GM10248 (cell line): ENCODE measurements at regions of chr5 and their contacts with region 1.

Region 1: DNA sequence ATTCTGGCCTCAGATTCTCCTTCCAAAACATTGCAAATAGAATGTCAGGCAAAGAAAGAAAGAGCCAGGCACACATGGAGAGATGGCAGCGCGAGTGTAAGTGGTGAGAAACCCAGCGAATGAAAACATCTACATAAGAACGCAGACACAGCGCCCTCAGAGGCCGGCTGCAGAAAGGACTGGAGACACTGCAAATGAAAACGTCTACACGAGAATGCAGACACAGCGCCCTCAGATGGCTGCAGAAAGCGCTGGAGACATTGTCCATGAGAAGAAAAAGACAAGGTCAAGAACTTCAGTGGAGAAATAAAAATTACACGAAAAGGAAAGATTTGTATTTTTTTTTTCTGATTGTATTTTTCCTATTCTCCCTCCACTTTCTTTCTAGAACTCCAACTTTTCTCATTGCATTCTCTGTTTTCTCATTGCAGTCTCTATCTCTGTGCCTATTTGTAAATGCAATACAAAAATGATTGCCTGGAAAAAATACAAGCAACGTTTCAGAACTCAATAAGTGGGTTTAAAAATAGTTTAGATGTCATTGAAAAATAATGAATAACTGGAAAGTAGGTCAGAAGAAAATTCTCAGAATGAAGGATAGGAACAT is 117.9 kb upstream of the LPCAT1 start:
- DNase-seq: peak; percentile 87
- CTCF ChIP-seq: peak; percentile 98

Region 2: DNA sequence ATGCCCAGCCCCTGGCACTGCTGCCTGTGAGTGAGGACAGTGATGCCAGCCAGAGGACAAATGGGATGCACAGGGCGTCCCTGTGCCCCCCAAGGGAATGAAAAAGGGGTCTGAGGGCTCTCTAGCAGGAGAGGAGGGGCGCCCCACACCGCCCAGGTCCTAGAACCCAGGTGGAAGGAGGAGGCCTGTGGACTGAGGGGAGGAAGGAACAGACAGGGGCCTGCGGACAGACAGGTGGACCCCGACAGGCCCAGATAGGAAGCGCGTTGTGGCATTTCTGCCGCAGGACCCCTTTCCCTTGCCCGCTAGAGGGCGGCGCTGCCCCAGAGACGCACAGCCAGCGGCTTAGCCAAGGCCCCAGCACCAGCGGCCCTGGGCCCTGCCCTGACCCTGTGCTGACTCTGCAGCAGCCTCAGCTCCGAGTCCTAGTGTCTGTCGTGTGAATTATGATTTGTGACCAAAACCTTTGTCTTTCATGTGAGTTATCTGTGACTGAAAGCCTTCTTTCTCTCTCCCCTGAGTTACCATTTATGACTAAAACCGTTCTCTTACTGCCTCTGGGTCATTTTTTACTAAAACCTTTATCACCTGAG is 718.3 kb before region 1 on chr5:
- CTCF ChIA-PET with region 1: interaction called, 22 read pairs
- POLR2A ChIA-PET with region 1: no interaction called
- DNase-seq: peak; percentile 89
- CTCF ChIP-seq: peak; percentile 89

Region 3: GRCh38 chr5:1167728-1168709 is 473.6 kb before region 1 on chr5:
- CTCF ChIA-PET with region 1: interaction called, 69 read pairs
- POLR2A ChIA-PET with region 1: no interaction called
- DNase-seq: peak; percentile 82
- CTCF ChIP-seq: peak; percentile 85

Region 4: GRCh38 chr5:1174122-1174936 is 467.3 kb before region 1 on chr5:
- CTCF ChIA-PET with region 1: interaction called, 69 read pairs
- POLR2A ChIA-PET with region 1: no interaction called
- DNase-seq: peak; percentile 72
- CTCF ChIP-seq: peak; percentile 57

Region 5: DNA sequence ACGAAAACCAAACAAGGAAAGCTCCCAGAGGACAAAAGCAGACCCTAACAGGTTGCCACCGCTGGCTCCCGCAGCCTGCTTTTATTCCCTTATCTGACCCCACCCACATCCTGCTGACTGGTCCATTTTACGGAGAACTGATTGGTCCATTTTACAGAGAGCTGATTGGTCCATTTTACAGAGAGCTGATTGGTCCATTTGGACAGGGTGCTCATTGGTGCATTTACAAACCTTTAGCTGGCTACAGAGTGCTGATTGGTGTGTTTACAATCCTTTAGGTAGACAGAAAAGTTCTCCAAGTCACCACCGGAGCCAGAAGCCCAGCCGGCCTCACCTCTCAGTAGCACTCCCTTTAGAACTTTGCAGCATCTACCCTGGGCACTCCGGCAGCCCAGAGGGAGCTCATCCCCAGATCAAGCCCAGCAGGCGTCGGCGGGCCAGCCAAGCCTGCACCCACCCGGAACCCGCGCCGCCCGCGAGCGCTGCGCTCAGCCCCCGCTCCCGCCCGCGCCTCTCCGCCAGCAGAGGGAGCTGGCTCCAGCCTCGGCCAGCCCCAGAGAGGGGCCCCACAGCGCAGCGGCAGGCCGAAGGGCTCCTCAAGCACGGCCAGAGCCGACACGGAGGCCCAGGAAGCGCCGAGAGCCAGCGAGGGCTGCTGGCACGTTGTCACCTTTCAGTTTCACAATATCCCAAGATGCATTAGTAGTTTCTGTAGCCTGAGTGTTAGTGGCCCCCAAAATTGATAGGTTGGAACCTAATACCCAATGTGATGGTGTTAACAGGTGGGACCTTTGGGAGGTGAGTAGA is 261.4 kb before region 1 on chr5:
- CTCF ChIA-PET with region 1: interaction called, 13 read pairs
- POLR2A ChIA-PET with region 1: no interaction called
- DNase-seq: no peak
- CTCF ChIP-seq: peak; percentile 76

Region 6: GRCh38 chr5:1652596-1653345 is 11.1 kb after region 1 on chr5:
- CTCF ChIA-PET with region 1: interaction called, 18 read pairs
- POLR2A ChIA-PET with region 1: no interaction called
- DNase-seq: no peak
- CTCF ChIP-seq: no peak

Region 7: DNA sequence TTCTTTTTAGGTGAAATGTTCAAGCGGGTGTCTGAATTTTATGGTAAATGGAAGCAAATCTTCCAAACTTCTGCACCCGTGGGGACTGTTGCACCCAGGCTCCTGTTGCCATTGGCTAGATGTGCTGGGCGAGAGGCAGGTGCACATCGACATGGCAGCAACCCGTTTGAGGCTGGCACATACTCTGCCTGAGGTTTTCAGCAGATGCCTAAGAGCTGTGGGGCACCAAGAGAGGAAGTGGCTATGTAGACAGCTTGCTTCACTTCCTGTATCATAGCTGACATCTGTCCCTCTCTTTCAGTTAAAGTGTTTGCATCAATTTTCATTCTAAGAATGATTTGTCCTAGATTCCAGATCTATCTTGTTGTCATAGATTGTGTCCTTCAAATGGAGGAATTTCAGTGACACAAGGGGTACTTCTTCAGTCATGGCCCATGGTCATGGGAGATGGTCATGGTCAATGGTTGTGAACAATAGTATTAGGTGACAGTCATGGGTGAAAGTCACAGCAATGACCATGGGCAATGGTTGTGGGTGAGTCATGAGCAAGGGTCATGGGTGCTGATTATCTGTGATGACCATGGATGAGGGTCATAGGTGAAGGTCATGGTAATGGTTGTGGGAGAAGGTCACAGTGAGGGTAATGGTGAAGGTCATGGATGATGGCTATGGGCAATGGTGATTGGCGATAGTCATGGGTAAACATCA is 356.1 kb after region 1 on chr5:
- CTCF ChIA-PET with region 1: no interaction called
- POLR2A ChIA-PET with region 1: no interaction called
- DNase-seq: no peak
- CTCF ChIP-seq: no peak